ENCODE measurements at regions of chr12 and their contacts with region 1.

Region 1: DNA sequence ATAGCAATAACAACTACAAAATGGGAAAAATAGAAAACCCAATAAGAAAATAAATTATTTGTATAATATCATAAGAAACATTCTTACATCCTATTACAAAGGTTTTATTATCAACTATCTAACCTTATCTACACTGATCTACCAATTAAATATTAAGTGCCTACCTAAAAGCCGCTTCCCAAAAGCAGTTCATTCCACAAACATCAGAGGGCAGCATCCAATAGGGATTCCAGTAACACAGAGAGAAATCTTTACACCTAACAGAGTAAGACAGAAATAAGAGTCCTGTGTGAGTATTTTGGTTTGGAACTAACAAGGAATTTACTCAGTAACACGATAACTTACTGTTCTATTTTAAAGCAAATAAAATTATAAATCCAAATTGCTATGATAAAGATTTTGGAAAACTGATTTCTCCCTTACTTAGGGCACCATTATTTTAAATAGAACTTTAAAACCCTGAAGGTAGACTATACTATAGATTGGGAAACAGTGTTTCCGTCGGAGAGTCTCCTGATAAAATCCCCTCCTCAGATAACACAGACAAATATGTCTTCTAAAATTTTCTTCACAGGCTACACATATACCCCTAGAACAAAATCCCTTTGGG is 15.0 kb downstream of the GXYLT1 start:
- DNase-seq: peak; percentile 86
- H3K4me3 ChIP-seq: no peak overlapping the region
- H3K27ac ChIP-seq: no peak overlapping the region
- H3K4me1 ChIP-seq: peaks cover 22% of the 10 kb centered on the region
- H3K27me3 ChIP-seq: no peaks in the 10 kb centered on the region
- CTCF ChIP-seq: peak; percentile 54 to 62
- POLR2A ChIP-seq: no peak

Region 2: GRCh38 chr12:42094277-42094676 is 35.4 kb before region 1 on chr12:
- CTCF ChIA-PET with region 1: no interaction called
- POLR2A ChIA-PET with region 1: no interaction called
- dilution Hi-C with region 1: no loop called
- intact Hi-C with region 1: no loop called
- DNase-seq: peak; percentile 39
- H3K4me3 ChIP-seq: no peak overlapping the region
- H3K27ac ChIP-seq: no peak overlapping the region
- H3K4me1 ChIP-seq: peaks cover 23% of the 10 kb centered on the region
- H3K27me3 ChIP-seq: no peaks in the 10 kb centered on the region
- CTCF ChIP-seq: no peak
- POLR2A ChIP-seq: no peak

Region 3: GRCh38 chr12:42119085-42119633 is 10.5 kb before region 1 on chr12:
- CTCF ChIA-PET with region 1: interaction called, 10 read pairs
- POLR2A ChIA-PET with region 1: no interaction called
- dilution Hi-C with region 1: no loop called
- intact Hi-C with region 1: no loop called
- DNase-seq: peak; percentile 44
- H3K4me3 ChIP-seq: no peak overlapping the region
- H3K27ac ChIP-seq: no peak overlapping the region
- H3K4me1 ChIP-seq: peaks cover 5% of the 10 kb centered on the region
- H3K27me3 ChIP-seq: no peaks in the 10 kb centered on the region
- CTCF ChIP-seq: no peak
- POLR2A ChIP-seq: no peak

Region 4: GRCh38 chr12:42144408-42145196 is 14.9 kb after region 1 on chr12 and contains the start of gene GXYLT1:
- CTCF ChIA-PET with region 1: interaction called, 4 read pairs
- POLR2A ChIA-PET with region 1: no interaction called
- dilution Hi-C with region 1: no loop called
- intact Hi-C with region 1: loop called (anchors 1 kb)
- DNase-seq: peak; percentile 95
- H3K4me3 ChIP-seq: peak within 1 kb of the TSS; percentile 86 to 93 (median 89)
- H3K27ac ChIP-seq: peak within 1 kb of the TSS; percentile 62
- H3K4me1 ChIP-seq: peaks cover 14% of the 10 kb centered on the region
- H3K27me3 ChIP-seq: no peaks in the 10 kb centered on the region
- CTCF ChIP-seq: no peak
- POLR2A ChIP-seq: peak; percentile 54
- total RNA-seq, gene GXYLT1: 23.0 and 23.4 TPM in 2 replicates

Region 5: DNA sequence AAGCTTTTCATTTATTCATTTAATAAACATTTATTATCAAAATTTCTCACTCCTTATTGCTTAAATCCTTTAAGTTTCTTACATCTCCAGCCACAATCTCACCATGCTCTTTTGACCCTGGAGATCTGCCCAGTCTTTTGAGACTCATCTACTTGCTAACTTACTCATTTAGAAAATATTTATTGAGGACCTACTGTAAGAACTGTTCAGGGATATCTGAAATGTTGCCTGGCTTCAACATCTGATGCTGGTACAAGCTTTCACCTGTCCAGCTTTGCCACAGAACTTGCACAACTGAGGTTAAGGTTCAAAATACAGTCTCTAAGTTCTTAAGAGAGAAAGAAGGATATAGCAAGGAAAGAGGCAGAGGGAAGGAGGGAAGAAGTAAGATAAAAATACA is 32.5 kb after region 1 on chr12:
- CTCF ChIA-PET with region 1: no interaction called
- POLR2A ChIA-PET with region 1: no interaction called
- dilution Hi-C with region 1: no loop called
- intact Hi-C with region 1: no loop called
- DNase-seq: no peak
- H3K4me3 ChIP-seq: no peak overlapping the region
- H3K27ac ChIP-seq: no peak overlapping the region
- H3K4me1 ChIP-seq: no peaks in the 10 kb centered on the region
- H3K27me3 ChIP-seq: no peaks in the 10 kb centered on the region
- CTCF ChIP-seq: no peak
- POLR2A ChIP-seq: no peak

Region 6: GRCh38 chr12:42568952-42569915 is 439.5 kb after region 1 on chr12:
- CTCF ChIA-PET with region 1: interaction called, 5 read pairs
- POLR2A ChIA-PET with region 1: no interaction called
- dilution Hi-C with region 1: no loop called
- intact Hi-C with region 1: loop called (anchors 1 kb)
- DNase-seq: peak; percentile 72
- H3K4me3 ChIP-seq: no peak overlapping the region
- H3K27ac ChIP-seq: no peak overlapping the region
- H3K4me1 ChIP-seq: peaks cover 33% of the 10 kb centered on the region
- H3K27me3 ChIP-seq: no peaks in the 10 kb centered on the region
- CTCF ChIP-seq: peak; percentile 29 to 35
- POLR2A ChIP-seq: no peak

Measured in endothelial cell of umbilical vein (primary cell).